Kidney (tissue), 22 donors: ENCODE measurements at regions of chr17 and their contacts with region 1.

Region 1: GRCh38 chr17:20121359-20122253 is 112.4 kb downstream of the SPECC1 start:
- DNase-seq: peak in 3 of 5 donors; percentile 55 to 69 (median 58)
- H3K4me3 ChIP-seq: no peak overlapping the region
- H3K27ac ChIP-seq: no peak overlapping the region
- H3K4me1 ChIP-seq: no peaks in the 10 kb centered on the region
- H3K27me3 ChIP-seq: no peaks in the 10 kb centered on the region
- CTCF ChIP-seq: peak; percentile 76

Region 2: GRCh38 chr17:19992803-19993713 is 128.5 kb before region 1 on chr17:
- intact Hi-C with region 1: loop called (anchors 5 kb)
- DNase-seq: peak; percentile 91 to 96 (median 95)
- H3K4me3 ChIP-seq: no peak overlapping the region
- H3K27ac ChIP-seq: no peak overlapping the region
- H3K4me1 ChIP-seq: no peaks in the 10 kb centered on the region
- H3K27me3 ChIP-seq: no peaks in the 10 kb centered on the region
- CTCF ChIP-seq: peak; percentile 86

Region 3: DNA sequence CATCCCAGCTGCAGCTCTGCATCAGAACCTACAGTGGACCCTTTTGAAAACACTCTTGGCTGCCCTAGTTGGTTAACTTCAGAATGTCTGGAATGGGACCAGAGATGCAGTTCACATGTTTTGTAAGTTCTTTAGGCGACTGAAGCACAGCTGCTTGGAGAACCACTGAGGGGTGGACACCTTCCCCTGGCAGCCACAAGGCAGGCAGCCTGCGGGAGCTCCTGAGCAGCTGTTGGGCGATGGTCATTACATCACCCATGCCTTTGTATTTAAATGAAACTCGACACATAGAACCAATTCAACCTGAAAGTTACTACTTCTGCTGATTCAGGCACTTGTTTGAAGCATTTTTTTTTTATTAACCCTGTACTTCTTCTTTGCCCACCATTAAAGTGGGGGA is 194.2 kb after region 1 on chr17:
- intact Hi-C with region 1: loop called (anchors 10 kb)
- DNase-seq: no peak
- H3K4me3 ChIP-seq: no peak overlapping the region
- H3K27ac ChIP-seq: no peak overlapping the region
- H3K4me1 ChIP-seq: no peaks in the 10 kb centered on the region
- H3K27me3 ChIP-seq: no peaks in the 10 kb centered on the region
- CTCF ChIP-seq: no peak